Right ventricle myocardium inferior (tissue), 1 donor: ENCODE measurements at regions of chr1 and their contacts with region 1.

Region 1: GRCh38 chr1:107782217-107782845 is 182.6 kb downstream of the VAV3 start:
- DNase-seq: no peak
- ATAC-seq: peak; percentile 52

Region 2: GRCh38 chr1:107637101-107637500 is 145.2 kb before region 1 on chr1:
- intact Hi-C with region 1: no loop called
- DNase-seq: no peak
- ATAC-seq: no peak

Region 3: GRCh38 chr1:108125312-108126138 is 343.2 kb after region 1 on chr1:
- intact Hi-C with region 1: loop called (anchors 1 kb)
- DNase-seq: no peak
- ATAC-seq: peak; percentile 91